Caco-2 (cell line): ENCODE measurements at regions of chr10 and their contacts with region 1.

Region 1: GRCh38 chr10:67779465-67780203 is 58.4 kb downstream of the DNAJC12 start:
- DNase-seq: peak; percentile 80 to 88
- H3K4me3 ChIP-seq: no peak overlapping the region
- H3K4me3 Mint-ChIP-seq: no peak overlapping the region
- H3K27ac Mint-ChIP-seq: no peak overlapping the region
- H3K4me1 ChIP-seq: no peaks in the 10 kb centered on the region
- H3K4me1 Mint-ChIP-seq: no peaks in the 10 kb centered on the region
- H3K27me3 ChIP-seq: no peaks in the 10 kb centered on the region
- H3K27me3 Mint-ChIP-seq: peaks cover 4% of the 10 kb centered on the region
- CTCF ChIP-seq: peak; percentile 92 to 95

Region 2: GRCh38 chr10:67050415-67050814 is 729.2 kb before region 1 on chr10:
- CTCF ChIA-PET with region 1: no interaction called
- POLR2A ChIA-PET with region 1: no interaction called
- intact Hi-C with region 1: no loop called
- DNase-seq: no peak
- H3K4me3 ChIP-seq: no peak overlapping the region
- H3K4me3 Mint-ChIP-seq: no peak overlapping the region
- H3K27ac Mint-ChIP-seq: no peak overlapping the region
- H3K4me1 ChIP-seq: no peaks in the 10 kb centered on the region
- H3K4me1 Mint-ChIP-seq: no peaks in the 10 kb centered on the region
- H3K27me3 ChIP-seq: no peaks in the 10 kb centered on the region
- H3K27me3 Mint-ChIP-seq: peaks cover 10% of the 10 kb centered on the region
- CTCF ChIP-seq: no peak

Region 3: DNA sequence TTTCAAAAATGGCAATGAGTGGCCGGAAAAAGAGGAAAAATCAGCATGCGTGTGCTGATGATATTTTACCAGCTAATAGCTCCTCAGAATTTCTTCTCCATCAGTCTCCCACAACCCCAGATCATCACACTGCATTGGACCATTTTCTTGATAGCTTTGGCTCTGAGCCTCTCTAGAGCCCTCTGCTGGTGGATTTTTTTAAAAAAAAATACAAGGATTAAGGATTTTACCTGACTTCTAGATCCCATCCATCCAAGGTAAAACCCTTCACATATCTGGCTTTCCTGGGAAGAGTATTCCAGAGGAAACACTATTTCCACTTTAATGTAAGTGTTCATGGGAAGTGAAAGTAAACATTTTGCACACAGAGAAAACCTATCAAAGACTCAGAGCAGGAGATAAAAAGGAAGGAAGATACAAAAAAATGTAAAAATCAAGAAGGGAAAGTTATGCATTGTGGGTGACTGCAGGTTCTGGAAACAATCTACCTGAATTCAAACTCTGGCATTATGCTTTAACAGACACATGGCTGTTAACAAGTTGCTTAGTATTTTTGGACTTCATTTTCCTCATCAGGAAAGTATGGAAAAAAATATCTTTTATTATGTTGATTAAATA is 472.9 kb before region 1 on chr10:
- CTCF ChIA-PET with region 1: no interaction called
- POLR2A ChIA-PET with region 1: no interaction called
- intact Hi-C with region 1: no loop called
- DNase-seq: peak in 1 of 2 experiments; percentile 69
- H3K4me3 ChIP-seq: no peak overlapping the region
- H3K4me3 Mint-ChIP-seq: no peak overlapping the region
- H3K27ac Mint-ChIP-seq: no peak overlapping the region
- H3K4me1 ChIP-seq: no peaks in the 10 kb centered on the region
- H3K4me1 Mint-ChIP-seq: no peaks in the 10 kb centered on the region
- H3K27me3 ChIP-seq: no peaks in the 10 kb centered on the region
- H3K27me3 Mint-ChIP-seq: no peaks in the 10 kb centered on the region
- CTCF ChIP-seq: peak; percentile 72 to 89

Region 4: GRCh38 chr10:67666416-67667034 is 113.1 kb before region 1 on chr10:
- CTCF ChIA-PET with region 1: interaction called, 30 read pairs
- POLR2A ChIA-PET with region 1: no interaction called
- intact Hi-C with region 1: loop called (anchors 1 kb)
- DNase-seq: peak in 1 of 2 experiments; percentile 43
- H3K4me3 ChIP-seq: no peak overlapping the region
- H3K4me3 Mint-ChIP-seq: no peak overlapping the region
- H3K27ac Mint-ChIP-seq: no peak overlapping the region
- H3K4me1 ChIP-seq: no peaks in the 10 kb centered on the region
- H3K4me1 Mint-ChIP-seq: no peaks in the 10 kb centered on the region
- H3K27me3 ChIP-seq: no peaks in the 10 kb centered on the region
- H3K27me3 Mint-ChIP-seq: peaks cover 21% of the 10 kb centered on the region
- CTCF ChIP-seq: peak; percentile 61 to 75

Region 5: DNA sequence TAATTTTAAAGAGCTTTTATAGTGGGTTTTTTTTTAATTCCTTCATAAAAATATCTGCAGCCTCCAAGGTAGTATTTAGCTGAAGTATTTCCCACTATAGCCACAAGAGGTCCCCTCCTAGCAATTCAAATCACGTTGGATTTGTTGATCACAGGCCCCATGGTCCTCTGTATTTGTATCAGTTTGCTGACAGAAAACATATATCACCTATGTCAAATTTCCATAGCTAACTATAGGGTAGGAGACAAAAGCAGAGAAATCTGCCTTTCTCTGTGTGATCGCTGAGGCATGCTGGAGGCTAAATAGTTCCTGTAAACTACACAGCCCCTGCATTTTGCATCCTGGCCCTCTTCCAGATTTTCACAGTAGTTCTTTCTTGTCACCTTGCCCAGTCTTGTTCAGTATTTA is 81.9 kb before region 1 on chr10:
- CTCF ChIA-PET with region 1: interaction called, 104 read pairs
- POLR2A ChIA-PET with region 1: no interaction called
- intact Hi-C with region 1: loop called (anchors 1 kb)
- DNase-seq: peak in 1 of 2 experiments; percentile 61
- H3K4me3 ChIP-seq: no peak overlapping the region
- H3K4me3 Mint-ChIP-seq: no peak overlapping the region
- H3K27ac Mint-ChIP-seq: no peak overlapping the region
- H3K4me1 ChIP-seq: no peaks in the 10 kb centered on the region
- H3K4me1 Mint-ChIP-seq: no peaks in the 10 kb centered on the region
- H3K27me3 ChIP-seq: peaks cover 2% of the 10 kb centered on the region; the same call in 1 of the 2 replicates
- H3K27me3 Mint-ChIP-seq: peaks cover 25% of the 10 kb centered on the region
- CTCF ChIP-seq: peak; percentile 90 to 92

Region 6: DNA sequence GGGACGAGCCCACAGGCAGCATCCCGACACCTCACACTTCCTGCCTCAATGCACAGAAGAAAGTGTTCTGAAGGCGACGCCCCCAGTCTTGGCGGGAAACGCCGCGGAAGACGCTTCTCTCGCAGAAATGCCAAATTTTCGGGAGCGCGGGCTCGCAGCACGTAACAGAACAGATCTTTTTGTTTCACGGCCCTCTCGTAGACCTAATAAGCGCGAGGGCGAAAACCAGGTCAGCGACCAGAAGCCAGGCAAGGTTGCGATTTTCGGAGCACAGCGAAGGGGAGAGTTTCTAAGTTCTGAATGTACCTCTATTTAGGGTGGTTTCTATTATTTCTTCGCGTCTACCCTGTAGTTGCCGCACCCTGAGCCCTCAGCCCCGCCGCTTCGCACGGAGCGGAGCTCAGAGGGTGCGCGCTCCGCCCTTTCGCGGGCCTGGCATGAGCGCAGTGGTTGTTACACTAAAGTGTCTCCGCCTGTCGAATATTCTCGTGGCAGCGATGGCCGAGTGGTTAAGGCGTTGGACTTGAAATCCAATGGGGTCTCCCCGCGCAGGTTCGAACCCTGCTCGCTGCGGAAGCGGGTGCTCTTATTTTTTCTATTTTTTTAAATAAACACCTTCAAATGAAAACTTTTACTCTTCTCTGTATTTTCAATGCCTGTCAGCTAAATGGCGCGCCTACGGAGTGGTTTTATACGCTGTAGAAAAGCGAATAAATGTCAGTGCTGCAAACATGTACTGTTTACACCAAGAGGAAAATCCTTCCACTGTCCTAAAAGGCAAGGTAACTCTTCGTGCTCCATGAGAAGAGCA is 15.4 kb before region 1 on chr10:
- CTCF ChIA-PET with region 1: interaction called, 15 read pairs
- POLR2A ChIA-PET with region 1: no interaction called
- intact Hi-C with region 1: loop called (anchors 1 kb)
- DNase-seq: peak; percentile 98 to 99
- H3K4me3 ChIP-seq: peak overlapping the region; percentile 81
- H3K4me3 Mint-ChIP-seq: peak overlapping the region; percentile 93
- H3K27ac Mint-ChIP-seq: peak overlapping the region; percentile 95
- H3K4me1 ChIP-seq: 0 out of 2 replicates have a peak, but pooled peaks cover 8% of the 10 kb centered on the region
- H3K4me1 Mint-ChIP-seq: peaks cover 25% of the 10 kb centered on the region
- H3K27me3 ChIP-seq: no peaks in the 10 kb centered on the region
- H3K27me3 Mint-ChIP-seq: peaks cover under 1% of the 10 kb centered on the region
- CTCF ChIP-seq: no peak

Region 7: GRCh38 chr10:68301790-68302502 is 522.3 kb after region 1 on chr10:
- CTCF ChIA-PET with region 1: no interaction called
- POLR2A ChIA-PET with region 1: no interaction called
- intact Hi-C with region 1: loop called (anchors 10 kb)
- DNase-seq: peak in 1 of 2 experiments; percentile 66
- H3K4me3 ChIP-seq: no peak overlapping the region
- H3K4me3 Mint-ChIP-seq: no peak overlapping the region
- H3K27ac Mint-ChIP-seq: no peak overlapping the region
- H3K4me1 ChIP-seq: peaks cover 20% of the 10 kb centered on the region
- H3K4me1 Mint-ChIP-seq: peaks cover 21% of the 10 kb centered on the region
- H3K27me3 ChIP-seq: no peaks in the 10 kb centered on the region
- H3K27me3 Mint-ChIP-seq: no peaks in the 10 kb centered on the region
- CTCF ChIP-seq: peak; percentile 65 to 83